Heart right ventricle (tissue), 16 donors: ENCODE measurements at regions of chr3 and their contacts with region 1.

Region 1: DNA sequence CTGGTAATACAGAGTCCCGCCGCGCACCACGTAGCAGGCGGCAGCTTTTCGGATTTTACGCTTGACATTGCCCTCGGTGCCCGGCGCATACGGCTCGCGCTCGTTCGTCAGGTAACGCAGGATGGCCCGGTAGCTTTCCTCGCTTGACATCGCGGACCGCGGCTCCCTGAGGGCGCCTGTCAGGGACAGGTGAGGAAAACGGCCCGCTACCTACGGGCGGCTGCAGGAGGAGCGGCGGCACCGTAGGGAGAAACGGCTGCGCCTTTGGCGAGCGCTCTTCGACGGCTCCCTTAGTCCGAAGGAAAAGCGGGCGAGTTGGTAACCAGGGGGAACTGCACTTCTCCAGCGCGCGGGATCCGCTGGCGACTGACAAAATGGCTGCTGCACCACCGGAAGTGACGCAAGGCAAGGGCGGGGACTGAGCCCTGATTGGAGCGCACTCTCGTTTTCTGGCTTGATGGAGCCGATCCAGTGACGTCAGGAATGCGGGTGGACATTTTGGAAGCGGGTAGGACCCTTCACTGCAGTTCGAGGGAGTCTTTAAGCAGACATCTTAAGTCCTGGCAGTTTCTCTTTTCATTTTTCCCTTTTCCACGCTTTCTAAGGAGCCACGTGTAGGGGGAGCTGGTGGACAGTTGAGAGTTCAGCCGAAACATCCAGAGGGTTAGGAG is at the start of gene ZBTB11:
- DNase-seq: peak; percentile 99 to 100
- ATAC-seq: peak; percentile 89 to 97 (median 95)
- H3K4me3 ChIP-seq: peak within 1 kb of the TSS; percentile 78 to 100 (median 96)
- H3K27ac ChIP-seq: peak within 1 kb of the TSS; percentile 83 to 99 (median 98)
- H3K4me1 ChIP-seq: peaks cover 10 to 46% (median 28%) of the 10 kb centered on the region in 9 donors
- H3K27me3 ChIP-seq: no peaks in the 10 kb centered on the region
- CTCF ChIP-seq: peak in 8 of 9 donors; percentile 36 to 73 (median 56)
- total RNA-seq, gene ZBTB11: 7.5 to 13.3 (median 8.7) TPM

Region 2: GRCh38 chr3:101512646-101513418 is 164.1 kb before region 1 on chr3 and contains the start of gene SENP7:
- intact Hi-C with region 1: loop called in 2 of 10 experiments (anchors 5 kb)
- DNase-seq: peak; percentile 88 to 90
- ATAC-seq: peak; percentile 87 to 93 (median 90)
- H3K4me3 ChIP-seq: peak within 1 kb of the TSS; percentile 67 to 99 (median 84)
- H3K27ac ChIP-seq: peak within 1 kb of the TSS; percentile 85 to 99 (median 94)
- H3K4me1 ChIP-seq: peaks cover 3 to 33% (median 17%) of the 10 kb centered on the region in 9 donors
- H3K27me3 ChIP-seq: peaks cover 0 to 11% (median 0%) of the 10 kb centered on the region in 7 donors
- CTCF ChIP-seq: no peak
- total RNA-seq, gene SENP7: 8.5 to 11.1 (median 10.0) TPM

Region 3: DNA sequence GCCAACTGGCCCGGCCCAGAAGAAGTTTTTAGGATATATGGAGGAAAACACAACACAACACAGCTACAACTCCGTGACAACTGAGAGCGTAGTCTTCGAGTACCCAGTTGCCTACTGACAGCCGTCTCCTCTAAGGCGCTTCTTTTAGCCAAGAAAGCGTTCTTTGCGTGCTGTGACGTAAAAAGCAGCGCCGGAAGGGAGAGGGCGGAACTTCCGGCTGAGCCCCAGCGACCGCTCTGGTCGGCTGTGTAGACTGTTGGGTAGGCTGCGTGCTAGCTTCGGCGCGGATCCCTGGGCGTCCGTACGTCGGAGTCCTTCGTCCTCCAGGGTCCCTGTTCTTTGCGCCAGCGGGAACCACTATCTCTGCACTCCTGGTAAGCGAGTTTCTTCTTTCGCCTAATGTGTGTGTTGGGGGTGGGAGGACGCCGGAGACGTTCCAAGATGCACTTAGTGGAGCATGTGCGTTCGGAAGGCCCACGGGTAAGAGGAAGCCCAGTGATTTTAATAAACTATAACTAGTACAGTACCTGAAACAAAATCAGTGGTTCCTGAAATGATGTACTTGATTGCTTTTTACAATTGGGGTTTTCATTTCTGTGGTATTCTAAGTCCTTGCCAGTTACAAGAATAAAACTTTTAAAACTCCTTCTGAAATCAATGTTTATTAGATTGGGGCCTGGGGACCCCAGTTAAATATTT is 115.1 kb before region 1 on chr3 and contains the start of gene TRMT10C:
- intact Hi-C with region 1: loop called in 1 of 10 experiments (anchors 10 kb)
- DNase-seq: peak; percentile 91 to 93
- ATAC-seq: peak; percentile 98 to 100 (median 100)
- H3K4me3 ChIP-seq: peak within 1 kb of the TSS; percentile 58 to 88 (median 75)
- H3K27ac ChIP-seq: peak within 1 kb of the TSS; percentile 75 to 94 (median 91)
- H3K4me1 ChIP-seq: peaks cover 3 to 36% (median 16%) of the 10 kb centered on the region in 9 donors
- H3K27me3 ChIP-seq: peaks cover 0 to 26% (median 18%) of the 10 kb centered on the region in 7 donors
- CTCF ChIP-seq: no peak
- total RNA-seq, gene TRMT10C: 20.9 to 29.7 (median 24.5) TPM

Region 4: DNA sequence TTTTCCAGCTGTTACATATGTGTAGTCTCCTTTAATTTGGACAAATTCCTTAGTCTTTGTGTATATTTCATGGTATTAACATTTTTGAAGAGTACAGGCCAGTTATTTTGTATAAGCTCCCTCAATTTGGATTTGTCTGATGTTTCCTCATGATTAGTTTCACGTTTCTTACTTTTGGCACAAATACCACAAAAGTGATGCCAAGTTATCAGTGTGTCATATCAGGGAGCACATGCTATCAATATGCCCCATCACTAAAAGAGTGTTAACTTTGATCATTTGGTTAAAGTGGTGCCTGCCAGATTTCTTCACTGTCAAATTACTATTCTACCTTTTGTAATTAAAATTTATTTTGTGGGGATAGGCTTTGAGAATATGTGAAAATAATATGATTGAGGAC is 88.3 kb before region 1 on chr3:
- intact Hi-C with region 1: loop called in 1 of 10 experiments (anchors 5 kb)
- DNase-seq: no peak
- ATAC-seq: no peak
- H3K4me3 ChIP-seq: no peak overlapping the region
- H3K27ac ChIP-seq: no peak overlapping the region
- H3K4me1 ChIP-seq: peaks cover 0 to 24% (median 8%) of the 10 kb centered on the region in 9 donors
- H3K27me3 ChIP-seq: no peaks in the 10 kb centered on the region
- CTCF ChIP-seq: no peak

Region 5: DNA sequence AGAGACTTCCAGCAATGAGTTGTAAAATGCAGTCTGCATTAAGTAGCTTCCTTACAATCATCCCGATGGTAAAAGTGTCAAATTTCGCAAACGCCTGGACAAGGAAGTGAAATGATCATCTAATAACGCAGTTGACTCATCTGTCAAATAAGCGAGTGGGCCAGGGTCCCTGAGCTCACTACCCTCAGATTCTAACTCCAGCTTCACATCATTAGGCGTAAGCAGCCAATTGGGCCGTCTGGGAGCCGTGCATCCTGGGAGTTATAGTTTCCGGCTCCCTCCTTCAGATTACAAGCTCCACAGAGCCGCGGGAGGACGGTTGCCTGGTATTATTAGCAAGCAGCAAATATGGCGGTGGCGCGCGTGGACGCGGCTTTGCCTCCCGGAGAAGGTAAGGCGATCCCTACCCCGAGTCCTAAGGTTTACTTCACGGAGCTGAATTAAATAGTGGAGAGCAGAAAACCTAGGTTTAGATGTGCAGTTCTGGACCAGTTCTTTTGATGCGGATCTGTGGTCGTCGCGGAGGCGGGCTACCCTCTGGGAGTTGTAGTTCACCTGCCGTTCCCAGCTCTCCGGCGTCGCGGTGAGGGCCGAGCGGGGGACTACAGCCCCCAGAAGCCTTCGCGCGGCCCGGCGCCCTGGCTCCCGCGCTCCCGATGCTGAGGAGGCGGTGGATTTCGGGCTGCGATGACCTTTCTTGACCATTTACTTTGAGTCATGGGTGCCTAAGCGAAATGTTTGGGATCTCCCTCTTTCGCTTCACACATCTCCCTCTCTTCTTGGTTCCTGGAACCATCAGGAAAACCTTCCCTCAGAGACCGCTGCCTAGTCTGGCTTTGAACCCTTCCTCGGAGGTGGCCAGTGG is 47.7 kb after region 1 on chr3 and contains the start of gene CEP97:
- intact Hi-C with region 1: loop called in 1 of 10 experiments (anchors 5 kb)
- DNase-seq: peak; percentile 89 to 91
- ATAC-seq: peak; percentile 99 to 100 (median 100)
- H3K4me3 ChIP-seq: peak within 1 kb of the TSS; percentile 43 to 89 (median 74)
- H3K27ac ChIP-seq: peak within 1 kb of the TSS in 9 of 10 donors; percentile 46 to 85 (median 82)
- H3K4me1 ChIP-seq: peaks cover 0 to 37% (median 13%) of the 10 kb centered on the region in 9 donors
- H3K27me3 ChIP-seq: no peaks in the 10 kb centered on the region
- CTCF ChIP-seq: no peak
- total RNA-seq, gene CEP97: 5.7 to 11.4 (median 7.8) TPM